Heart left ventricle (tissue), 16 donors: ENCODE measurements at regions of chr20 and their contacts with region 1.

Region 1: GRCh38 chr20:19692685-19693119 is 65.4 kb upstream of the RIN2 start:
- DNase-seq: peak; percentile 37 to 69 (median 52)
- ATAC-seq: peak in 2 of 4 donors; percentile 29 to 33
- H3K4me3 ChIP-seq: peak overlapping the region in 1 of 12 donors; percentile 12
- H3K27ac ChIP-seq: no peak overlapping the region
- H3K4me1 ChIP-seq: peaks cover 0 to 36% (median 15%) of the 10 kb centered on the region in 12 donors
- H3K27me3 ChIP-seq: no peaks in the 10 kb centered on the region
- CTCF ChIP-seq: peak; percentile 39 to 97 (median 92)
- POLR2A ChIP-seq: no peak

Region 2: GRCh38 chr20:19185090-19185489 is 507.6 kb before region 1 on chr20:
- intact Hi-C with region 1: no loop called
- DNase-seq: no peak
- ATAC-seq: no peak
- H3K4me3 ChIP-seq: no peak overlapping the region
- H3K27ac ChIP-seq: no peak overlapping the region
- H3K4me1 ChIP-seq: no peaks in the 10 kb centered on the region
- H3K27me3 ChIP-seq: no peaks in the 10 kb centered on the region
- CTCF ChIP-seq: peak in 1 of 12 donors; percentile 4
- POLR2A ChIP-seq: no peak

Region 3: GRCh38 chr20:19609642-19610223 is 83.0 kb before region 1 on chr20:
- intact Hi-C with region 1: no loop called
- DNase-seq: no peak
- ATAC-seq: no peak
- H3K4me3 ChIP-seq: no peak overlapping the region
- H3K27ac ChIP-seq: no peak overlapping the region
- H3K4me1 ChIP-seq: peaks cover 0 to 6% (median 0%) of the 10 kb centered on the region in 12 donors
- H3K27me3 ChIP-seq: peaks cover 0 to 5% (median 0%) of the 10 kb centered on the region in 9 donors
- CTCF ChIP-seq: no peak
- POLR2A ChIP-seq: no peak

Region 4: GRCh38 chr20:19757487-19758132 is 64.9 kb after region 1 on chr20:
- intact Hi-C with region 1: loop called in 8 of 10 experiments (anchors 2 to 10 kb)
- DNase-seq: peak; percentile 92 to 96 (median 94)
- ATAC-seq: peak; percentile 86 to 93 (median 90)
- H3K4me3 ChIP-seq: peak overlapping the region; percentile 52 to 94 (median 78)
- H3K27ac ChIP-seq: peak overlapping the region; percentile 91 to 100 (median 98)
- H3K4me1 ChIP-seq: peaks cover 6 to 50% (median 38%) of the 10 kb centered on the region in 12 donors
- H3K27me3 ChIP-seq: no peaks in the 10 kb centered on the region
- CTCF ChIP-seq: no peak
- POLR2A ChIP-seq: no peak

Region 5: DNA sequence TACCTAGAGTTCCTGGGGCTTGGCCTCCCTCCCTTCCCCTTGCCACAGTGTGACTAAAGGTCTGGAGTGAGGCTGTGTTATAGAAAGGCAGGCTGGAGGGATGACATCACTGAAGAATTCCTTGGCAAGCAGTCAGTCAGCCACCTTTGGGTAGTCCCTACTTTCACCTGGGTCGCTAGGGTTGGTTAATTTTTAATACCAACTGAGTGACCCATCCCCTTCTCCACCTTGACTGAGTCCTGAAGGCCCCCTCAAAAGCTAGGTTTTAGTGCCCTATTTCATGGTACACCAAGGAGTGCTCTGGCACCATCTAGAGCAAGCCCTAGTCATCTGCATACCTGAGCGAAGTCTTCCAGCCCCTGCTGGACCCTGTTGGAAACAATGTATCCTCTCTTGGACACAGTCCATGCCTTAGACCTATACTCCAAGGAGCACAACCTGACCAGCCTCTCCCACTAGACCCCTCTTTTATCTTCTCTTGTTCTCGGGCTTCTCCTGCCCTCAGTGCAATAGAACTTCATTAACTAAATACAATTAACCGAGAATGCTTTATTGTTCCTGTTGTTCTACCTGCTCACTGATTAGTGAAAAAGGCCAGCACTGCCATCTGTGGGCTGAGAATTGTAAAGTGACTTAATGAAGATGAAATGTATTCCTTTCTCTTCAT is 109.9 kb after region 1 on chr20:
- intact Hi-C with region 1: loop called in 8 of 10 experiments (anchors 1 to 5 kb)
- DNase-seq: no peak
- ATAC-seq: peak; percentile 42 to 68 (median 62)
- H3K4me3 ChIP-seq: no peak overlapping the region
- H3K27ac ChIP-seq: peak overlapping the region in 2 of 12 donors; percentile 1 to 20
- H3K4me1 ChIP-seq: peaks cover 2 to 46% (median 21%) of the 10 kb centered on the region in 12 donors
- H3K27me3 ChIP-seq: no peaks in the 10 kb centered on the region
- CTCF ChIP-seq: peak in 11 of 12 donors; percentile 18 to 49 (median 37)
- POLR2A ChIP-seq: no peak

Region 6: DNA sequence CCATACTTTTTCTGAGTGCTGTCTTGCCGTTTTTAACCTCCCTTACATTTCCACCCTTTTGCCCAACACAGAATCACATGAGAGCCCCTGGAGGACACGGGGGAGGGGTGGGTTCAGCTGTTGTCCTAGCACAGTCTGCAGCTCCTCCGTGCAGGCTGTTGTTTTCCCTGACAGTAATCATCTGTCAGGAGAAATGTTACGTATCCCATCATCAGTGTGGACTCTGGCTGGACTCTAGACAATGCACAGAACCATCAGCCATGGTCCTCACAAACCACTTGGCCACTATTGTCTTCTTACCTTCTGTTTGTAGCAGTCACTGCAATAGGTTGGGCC is 157.5 kb after region 1 on chr20:
- intact Hi-C with region 1: no loop called
- DNase-seq: peak in 2 of 5 donors; percentile 54 to 62
- ATAC-seq: peak; percentile 76 to 84 (median 77)
- H3K4me3 ChIP-seq: peak overlapping the region in 1 of 12 donors; percentile 14
- H3K27ac ChIP-seq: peak overlapping the region; percentile 39 to 79 (median 67)
- H3K4me1 ChIP-seq: peaks cover 4 to 28% (median 21%) of the 10 kb centered on the region in 12 donors
- H3K27me3 ChIP-seq: no peaks in the 10 kb centered on the region
- CTCF ChIP-seq: no peak
- POLR2A ChIP-seq: no peak

Region 7: GRCh38 chr20:19995220-19995863 is 302.6 kb after region 1 on chr20:
- intact Hi-C with region 1: loop called (anchors 1 to 5 kb)
- DNase-seq: no peak
- ATAC-seq: peak in 3 of 4 donors; percentile 15 to 37 (median 26)
- H3K4me3 ChIP-seq: no peak overlapping the region
- H3K27ac ChIP-seq: peak overlapping the region in 9 of 12 donors; percentile 64 to 84 (median 73)
- H3K4me1 ChIP-seq: peaks cover 27 to 97% (median 79%) of the 10 kb centered on the region in 12 donors
- H3K27me3 ChIP-seq: no peaks in the 10 kb centered on the region
- CTCF ChIP-seq: peak; percentile 68 to 86 (median 79)
- POLR2A ChIP-seq: no peak

Region 8: DNA sequence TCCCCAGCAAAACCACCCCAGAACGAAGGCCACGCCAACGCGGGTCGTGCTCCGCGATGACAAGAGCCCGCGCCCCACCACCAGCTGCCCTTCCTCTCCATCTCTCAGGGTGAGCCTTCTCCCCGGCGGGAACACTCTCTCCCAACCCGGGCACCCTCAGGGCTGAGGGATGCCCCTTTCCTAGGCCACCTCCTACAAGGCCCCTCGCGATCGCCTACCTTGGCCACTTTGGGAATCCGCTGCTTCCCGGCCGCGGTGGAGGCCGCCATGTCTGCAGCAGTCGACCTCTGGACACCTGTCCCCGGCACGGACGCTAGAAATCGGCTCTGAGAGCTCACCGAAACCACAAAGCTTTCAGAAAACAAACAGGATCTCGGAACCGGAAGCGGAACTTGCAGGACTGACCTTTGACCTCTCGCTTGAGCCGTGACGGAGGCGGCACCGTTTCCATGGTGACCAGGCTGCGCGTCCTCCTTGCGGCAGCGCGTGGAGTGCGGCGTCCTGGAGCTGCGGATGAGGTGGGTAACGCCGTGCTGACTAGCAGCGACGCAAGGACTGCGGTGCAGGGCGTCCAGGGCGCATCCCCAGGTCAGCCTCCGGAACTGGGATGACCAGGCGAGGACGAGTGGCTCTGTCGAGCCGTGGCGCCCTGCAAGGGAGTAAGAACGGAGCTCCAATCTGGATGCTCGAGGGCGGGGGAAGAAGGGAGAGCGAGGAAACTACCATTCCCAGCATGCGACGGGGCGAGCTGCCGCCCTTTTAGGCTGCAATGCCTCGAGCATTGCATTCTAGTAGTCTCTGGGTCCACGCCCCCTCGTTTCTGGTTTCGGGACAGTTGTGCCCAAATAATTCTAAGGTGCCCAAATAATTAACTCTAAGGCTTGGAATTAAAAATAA is 359.6 kb after region 1 on chr20 and contains the starts of genes CFAP61 and CRNKL1:
- intact Hi-C with region 1: loop called in 1 of 10 experiments (anchors 2 kb)
- DNase-seq: peak; percentile 96 to 98 (median 97)
- ATAC-seq: peak; percentile 95 to 99 (median 98)
- H3K4me3 ChIP-seq: peak within 1 kb of the TSS; percentile 67 to 99 (median 88)
- H3K27ac ChIP-seq: peak within 1 kb of the TSS; percentile 54 to 83 (median 79)
- H3K4me1 ChIP-seq: peaks cover 0 to 20% (median 12%) of the 10 kb centered on the region in 12 donors
- H3K27me3 ChIP-seq: no peaks in the 10 kb centered on the region
- CTCF ChIP-seq: peak in 1 of 12 donors; percentile 6
- POLR2A ChIP-seq: peak in 1 of 2 donors; percentile 20
- total RNA-seq, gene CFAP61: 17.5 to 102 (median 45.8) TPM
- total RNA-seq, gene CRNKL1: 13.4 to 21.5 (median 17.5) TPM

Region 9: DNA sequence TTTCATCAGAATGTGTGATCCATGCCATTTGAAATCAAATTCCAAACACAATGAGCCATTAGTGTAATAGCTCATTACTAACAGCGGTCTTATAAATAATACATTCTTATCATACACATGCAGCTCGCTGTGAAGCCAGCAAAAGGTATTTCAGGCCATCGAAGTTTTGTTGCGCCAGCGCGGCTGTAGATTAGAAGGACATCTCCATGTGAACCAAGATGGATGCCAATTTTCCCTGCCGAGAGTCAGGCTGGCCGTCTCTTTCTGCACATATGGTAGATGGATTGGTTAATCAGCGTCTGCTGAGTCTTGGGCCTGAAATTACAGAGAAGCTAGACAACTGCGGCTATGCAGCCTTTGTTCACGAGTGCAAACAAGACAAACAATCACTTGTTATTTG is 403.7 kb after region 1 on chr20:
- intact Hi-C with region 1: no loop called
- DNase-seq: peak in 3 of 5 donors; percentile 27 to 32 (median 29)
- ATAC-seq: peak; percentile 18 to 67 (median 44)
- H3K4me3 ChIP-seq: no peak overlapping the region
- H3K27ac ChIP-seq: peak overlapping the region in 6 of 12 donors; percentile 17 to 60 (median 44)
- H3K4me1 ChIP-seq: peaks cover 0 to 6% (median 0%) of the 10 kb centered on the region in 12 donors
- H3K27me3 ChIP-seq: peaks cover 0 to 9% (median 0%) of the 10 kb centered on the region in 9 donors
- CTCF ChIP-seq: no peak
- POLR2A ChIP-seq: no peak